Activated CD8-positive, alpha-beta T cell treated with anti-CD3 and anti-CD28 coated beads for 36 hours (primary cell): ENCODE measurements at regions of chr1 and their contacts with region 1.

Region 1: GRCh38 chr1:66331657-66332547 is 202.1 kb upstream of the SGIP1 start:
- DNase-seq: peak; percentile 70
- ATAC-seq: peak; percentile 16
- H3K4me3 Mint-ChIP-seq: peak overlapping the region; percentile 99
- H3K27ac Mint-ChIP-seq: peak overlapping the region; percentile 98
- H3K4me1 Mint-ChIP-seq: peaks cover 48% of the 10 kb centered on the region
- H3K27me3 Mint-ChIP-seq: no peaks in the 10 kb centered on the region
- CTCF ChIP-seq: no peak

Region 2: GRCh38 chr1:66253330-66253921 is 78.5 kb before region 1 on chr1:
- CTCF ChIA-PET with region 1: interaction called, 23 read pairs
- POLR2A ChIA-PET with region 1: interaction called, 16 read pairs
- intact Hi-C with region 1: no loop called
- DNase-seq: no peak
- ATAC-seq: peak; percentile 89
- H3K4me3 Mint-ChIP-seq: no peak overlapping the region
- H3K27ac Mint-ChIP-seq: no peak overlapping the region
- H3K4me1 Mint-ChIP-seq: peaks cover 46% of the 10 kb centered on the region
- H3K27me3 Mint-ChIP-seq: peaks cover 1% of the 10 kb centered on the region
- CTCF ChIP-seq: peak; percentile 83

Region 3: DNA sequence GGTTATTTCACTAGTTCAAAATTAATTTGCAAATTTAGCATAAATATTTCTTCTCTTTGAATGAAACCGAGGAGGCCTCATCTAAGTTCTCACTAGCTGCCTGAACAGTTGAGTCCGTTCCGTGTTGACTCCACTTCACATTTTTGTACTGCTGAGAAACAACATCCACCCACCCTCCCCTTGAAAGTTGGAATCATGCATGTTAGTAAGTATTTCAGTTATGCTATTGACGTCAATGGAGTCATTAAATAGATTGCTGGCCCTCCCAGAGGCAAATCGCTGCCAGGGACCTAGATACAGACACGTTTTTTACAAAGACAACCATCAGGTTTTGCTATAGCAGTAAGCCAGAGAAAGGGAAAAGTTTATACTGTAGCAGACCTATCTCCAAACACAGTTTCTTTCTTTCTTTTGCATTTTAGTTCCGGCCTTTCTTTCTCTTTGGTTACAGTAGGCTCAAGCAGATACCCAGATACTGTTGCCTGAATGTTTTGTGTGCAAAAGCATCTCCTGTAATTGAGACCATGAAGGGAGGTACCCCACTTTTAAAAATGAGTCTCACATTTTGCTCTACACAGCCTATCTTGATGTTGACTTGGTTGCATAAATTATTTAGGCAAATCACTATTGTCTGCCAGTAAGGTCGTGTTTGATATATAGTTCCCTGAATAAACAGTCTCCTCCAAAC is 60.5 kb before region 1 on chr1:
- CTCF ChIA-PET with region 1: interaction called, 12 read pairs
- POLR2A ChIA-PET with region 1: interaction called, 23 read pairs
- intact Hi-C with region 1: no loop called
- DNase-seq: peak; percentile 80
- ATAC-seq: peak; percentile 63
- H3K4me3 Mint-ChIP-seq: no peak overlapping the region
- H3K27ac Mint-ChIP-seq: peak overlapping the region; percentile 86
- H3K4me1 Mint-ChIP-seq: peaks cover 65% of the 10 kb centered on the region
- H3K27me3 Mint-ChIP-seq: no peaks in the 10 kb centered on the region
- CTCF ChIP-seq: no peak

Region 4: GRCh38 chr1:66300972-66301451 is 30.9 kb before region 1 on chr1:
- CTCF ChIA-PET with region 1: interaction called, 5 read pairs
- POLR2A ChIA-PET with region 1: interaction called, 17 read pairs
- intact Hi-C with region 1: no loop called
- DNase-seq: peak; percentile 64
- ATAC-seq: peak; percentile 92
- H3K4me3 Mint-ChIP-seq: peak overlapping the region; percentile 52
- H3K27ac Mint-ChIP-seq: peak overlapping the region; percentile 74
- H3K4me1 Mint-ChIP-seq: peaks cover 43% of the 10 kb centered on the region
- H3K27me3 Mint-ChIP-seq: no peaks in the 10 kb centered on the region
- CTCF ChIP-seq: no peak

Region 5: GRCh38 chr1:66374561-66375111 is 42.7 kb after region 1 on chr1:
- CTCF ChIA-PET with region 1: interaction called, 14 read pairs
- POLR2A ChIA-PET with region 1: interaction called, 21 read pairs
- intact Hi-C with region 1: loop called (anchors 2 kb)
- DNase-seq: peak; percentile 76
- ATAC-seq: peak; percentile 75
- H3K4me3 Mint-ChIP-seq: peak overlapping the region; percentile 60
- H3K27ac Mint-ChIP-seq: peak overlapping the region; percentile 93
- H3K4me1 Mint-ChIP-seq: peaks cover 75% of the 10 kb centered on the region
- H3K27me3 Mint-ChIP-seq: no peaks in the 10 kb centered on the region
- CTCF ChIP-seq: no peak